ENCODE measurements at regions of chr11 and their contacts with region 1.

Region 1: DNA sequence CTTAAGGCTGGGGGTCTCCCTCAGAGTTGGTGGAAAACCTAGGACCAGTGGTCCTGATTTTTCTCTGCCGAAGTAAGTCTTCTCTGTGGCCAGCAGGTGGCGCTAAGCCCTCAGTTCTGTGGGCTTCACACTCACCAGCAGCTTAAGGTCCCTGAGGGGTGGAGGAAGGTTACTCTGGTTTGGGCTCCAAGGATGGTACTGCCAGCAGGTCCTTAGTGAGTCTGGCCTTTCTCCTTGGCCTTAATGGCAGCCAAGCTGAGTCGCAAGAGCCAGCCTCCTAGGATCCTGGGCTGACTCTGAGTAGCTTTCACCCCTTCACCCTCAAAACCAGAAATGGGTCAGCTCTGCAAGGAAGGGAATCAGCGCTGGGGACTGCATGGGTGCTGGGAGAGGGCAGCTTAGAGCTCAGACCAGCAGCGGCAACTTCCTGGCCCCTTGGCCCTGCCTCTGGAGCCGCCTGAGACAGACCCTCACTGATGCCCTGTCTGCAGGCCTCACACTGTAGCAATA is 4.4 kb downstream of the KCNJ11 start:
- DNase-seq: peak; percentile 54 to 60
- H3K4me3 ChIP-seq: no peak overlapping the region
- H3K27ac ChIP-seq: no peak overlapping the region
- H3K4me1 ChIP-seq: no peaks in the 10 kb centered on the region
- H3K27me3 ChIP-seq: no peaks in the 10 kb centered on the region
- CTCF ChIP-seq: peak; percentile 95

Region 2: DNA sequence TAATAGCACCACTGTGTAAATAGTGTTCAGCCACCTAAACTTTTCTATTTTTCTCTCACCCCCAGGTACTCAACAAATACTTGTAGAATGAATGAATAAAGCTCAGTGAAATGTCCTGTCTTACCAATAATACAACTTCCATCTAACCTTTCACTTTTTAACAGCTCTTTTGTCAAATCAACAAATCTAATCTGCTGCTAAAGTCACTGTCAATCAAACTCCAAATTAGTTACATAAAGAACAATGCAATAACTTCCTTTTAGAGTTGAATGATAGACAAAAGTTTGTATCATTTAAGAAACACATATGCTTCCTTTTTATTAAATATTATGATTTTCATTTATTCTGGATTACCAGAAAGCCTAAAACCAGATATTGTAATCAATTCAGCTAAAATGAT is 680.3 kb before region 1 on chr11:
- CTCF ChIA-PET with region 1: no interaction called
- POLR2A ChIA-PET with region 1: no interaction called
- intact Hi-C with region 1: no loop called
- DNase-seq: no peak
- H3K4me3 ChIP-seq: no peak overlapping the region
- H3K27ac ChIP-seq: no peak overlapping the region
- H3K4me1 ChIP-seq: no peaks in the 10 kb centered on the region
- H3K27me3 ChIP-seq: no peaks in the 10 kb centered on the region
- CTCF ChIP-seq: no peak

Region 3: GRCh38 chr11:17333799-17334586 is 50.1 kb before region 1 on chr11:
- CTCF ChIA-PET with region 1: no interaction called
- POLR2A ChIA-PET with region 1: no interaction called
- intact Hi-C with region 1: no loop called
- DNase-seq: no peak
- H3K4me3 ChIP-seq: no peak overlapping the region
- H3K27ac ChIP-seq: no peak overlapping the region
- H3K4me1 ChIP-seq: no peaks in the 10 kb centered on the region
- H3K27me3 ChIP-seq: no peaks in the 10 kb centered on the region
- CTCF ChIP-seq: no peak

Region 4: GRCh38 chr11:17432002-17432401 is 47.9 kb after region 1 on chr11:
- CTCF ChIA-PET with region 1: no interaction called
- POLR2A ChIA-PET with region 1: no interaction called
- intact Hi-C with region 1: no loop called
- DNase-seq: no peak
- H3K4me3 ChIP-seq: no peak overlapping the region
- H3K27ac ChIP-seq: no peak overlapping the region
- H3K4me1 ChIP-seq: no peaks in the 10 kb centered on the region
- H3K27me3 ChIP-seq: peaks cover 87% of the 10 kb centered on the region
- CTCF ChIP-seq: no peak

Region 5: GRCh38 chr11:17504330-17505107 is 120.5 kb after region 1 on chr11:
- CTCF ChIA-PET with region 1: interaction called, 6 read pairs
- POLR2A ChIA-PET with region 1: no interaction called
- intact Hi-C with region 1: loop called (anchors 1 kb)
- DNase-seq: peak; percentile 53 to 79
- H3K4me3 ChIP-seq: no peak overlapping the region
- H3K27ac ChIP-seq: no peak overlapping the region
- H3K4me1 ChIP-seq: no peaks in the 10 kb centered on the region
- H3K27me3 ChIP-seq: peaks cover 58% of the 10 kb centered on the region
- CTCF ChIP-seq: peak; percentile 92

Region 6: GRCh38 chr11:17528181-17528691 is 144.2 kb after region 1 on chr11:
- CTCF ChIA-PET with region 1: interaction called, 4 read pairs
- POLR2A ChIA-PET with region 1: no interaction called
- intact Hi-C with region 1: loop called (anchors 1 kb)
- DNase-seq: peak in 1 of 2 experiments; percentile 51
- H3K4me3 ChIP-seq: no peak overlapping the region
- H3K27ac ChIP-seq: no peak overlapping the region
- H3K4me1 ChIP-seq: no peaks in the 10 kb centered on the region
- H3K27me3 ChIP-seq: peaks cover 85% of the 10 kb centered on the region
- CTCF ChIP-seq: peak; percentile 81

Measured in PC-9 (cell line).